Caco-2 (cell line): ENCODE measurements at regions of chr1 and their contacts with region 1.

Region 1: DNA sequence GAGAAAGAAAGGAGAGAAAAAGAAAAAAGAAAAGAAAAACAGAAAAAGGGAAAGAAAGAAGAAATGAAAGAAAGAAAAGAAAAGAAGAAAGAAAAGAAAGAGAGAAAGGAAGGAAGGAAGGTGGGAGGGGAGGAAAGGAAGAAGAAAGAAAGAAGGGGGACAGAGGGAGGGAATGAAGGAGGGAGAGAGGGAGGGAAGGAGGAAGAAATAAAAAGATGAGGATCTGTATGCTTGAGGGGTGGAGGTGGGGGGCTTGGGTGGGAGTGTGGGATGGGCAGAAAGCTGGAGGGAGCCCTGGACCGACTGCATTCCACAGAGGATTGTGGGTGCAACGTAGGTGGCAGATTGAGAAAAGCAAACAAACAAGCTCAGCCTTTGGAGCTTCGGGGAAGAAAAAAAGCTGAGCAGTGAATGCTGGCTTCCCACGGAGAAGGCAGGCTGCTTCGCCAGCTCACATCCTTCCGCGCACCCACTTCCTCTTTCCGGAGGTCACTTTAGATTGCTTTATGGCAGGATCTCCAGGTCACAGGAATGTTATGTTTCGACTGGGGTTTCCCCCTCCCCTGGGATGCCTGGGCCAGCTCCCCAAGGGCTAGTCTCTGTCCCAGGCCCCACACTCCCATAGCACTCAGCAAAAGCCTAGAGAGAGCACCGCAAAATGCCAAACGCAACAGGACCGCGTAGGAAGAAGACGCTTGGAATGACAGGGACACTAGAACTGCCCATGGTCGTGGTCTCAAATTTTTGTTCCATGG is 20.7 kb upstream of the LGALS8 start:
- DNase-seq: peak; percentile 87 to 93
- H3K4me3 ChIP-seq: no peak overlapping the region
- H3K4me3 Mint-ChIP-seq: peak overlapping the region; percentile 61
- H3K27ac Mint-ChIP-seq: peak overlapping the region; percentile 95
- H3K4me1 ChIP-seq: peaks cover 42% of the 10 kb centered on the region
- H3K4me1 Mint-ChIP-seq: peaks cover 20% of the 10 kb centered on the region
- H3K27me3 ChIP-seq: no peaks in the 10 kb centered on the region
- H3K27me3 Mint-ChIP-seq: no peaks in the 10 kb centered on the region
- CTCF ChIP-seq: no peak

Region 2: GRCh38 chr1:236516929-236517704 is 14.1 kb after region 1 on chr1:
- CTCF ChIA-PET with region 1: interaction called, 3 read pairs
- POLR2A ChIA-PET with region 1: interaction called, 30 read pairs
- intact Hi-C with region 1: loop called (anchors 1 kb)
- DNase-seq: peak; percentile 64 to 66
- H3K4me3 ChIP-seq: 0 out of 2 replicates have a peak overlapping the region, but pooled peaks have one; percentile 6
- H3K4me3 Mint-ChIP-seq: peak overlapping the region; percentile 73
- H3K27ac Mint-ChIP-seq: peak overlapping the region; percentile 79
- H3K4me1 ChIP-seq: peaks cover 36% of the 10 kb centered on the region
- H3K4me1 Mint-ChIP-seq: peaks cover 57% of the 10 kb centered on the region
- H3K27me3 ChIP-seq: no peaks in the 10 kb centered on the region
- H3K27me3 Mint-ChIP-seq: no peaks in the 10 kb centered on the region
- CTCF ChIP-seq: no peak

Region 3: GRCh38 chr1:236523701-236524141 is 20.7 kb after region 1 on chr1 and contains the start of gene LGALS8:
- CTCF ChIA-PET with region 1: interaction called, 4 read pairs
- POLR2A ChIA-PET with region 1: interaction called, 14 read pairs
- intact Hi-C with region 1: loop called (anchors 1 kb)
- DNase-seq: peak; percentile 74 to 79
- H3K4me3 ChIP-seq: peak within 1 kb of the TSS; percentile 98
- H3K4me3 Mint-ChIP-seq: peak within 1 kb of the TSS; percentile 98
- H3K27ac Mint-ChIP-seq: peak within 1 kb of the TSS; percentile 98
- H3K4me1 ChIP-seq: peaks cover 8% of the 10 kb centered on the region
- H3K4me1 Mint-ChIP-seq: peaks cover 26% of the 10 kb centered on the region
- H3K27me3 ChIP-seq: no peaks in the 10 kb centered on the region
- H3K27me3 Mint-ChIP-seq: no peaks in the 10 kb centered on the region
- CTCF ChIP-seq: no peak
- total RNA-seq, gene LGALS8: 67.4 and 72.3 TPM in 2 replicates